Activated CD8-positive, alpha-beta memory T cell treated with anti-CD3 and anti-CD28 coated beads, Interleukin-2, amount 10 ng/mL, durations not matched to agents 7 days and 5 days (primary cell): ENCODE measurements at regions of chr12 and their contacts with region 1.

Region 1: GRCh38 chr12:117587631-117588287 is 226.3 kb upstream of the NOS1 start:
- DNase-seq: peak; percentile 53
- ATAC-seq: no peak
- H3K4me3 Mint-ChIP-seq: no peak overlapping the region
- H3K27ac Mint-ChIP-seq: no peak overlapping the region
- H3K4me1 Mint-ChIP-seq: no peaks in the 10 kb centered on the region
- H3K27me3 Mint-ChIP-seq: peaks cover 4% of the 10 kb centered on the region

Region 2: GRCh38 chr12:117236456-117237001 is 351.2 kb before region 1 on chr12:
- CTCF ChIA-PET with region 1: interaction called, 34 read pairs
- DNase-seq: peak; percentile 84
- ATAC-seq: peak; percentile 63
- H3K4me3 Mint-ChIP-seq: no peak overlapping the region
- H3K27ac Mint-ChIP-seq: no peak overlapping the region
- H3K4me1 Mint-ChIP-seq: no peaks in the 10 kb centered on the region
- H3K27me3 Mint-ChIP-seq: peaks cover 9% of the 10 kb centered on the region

Region 3: GRCh38 chr12:117367011-117367638 is 220.6 kb before region 1 on chr12:
- CTCF ChIA-PET with region 1: interaction called, 37 read pairs
- DNase-seq: peak; percentile 66
- ATAC-seq: no peak
- H3K4me3 Mint-ChIP-seq: no peak overlapping the region
- H3K27ac Mint-ChIP-seq: no peak overlapping the region
- H3K4me1 Mint-ChIP-seq: no peaks in the 10 kb centered on the region
- H3K27me3 Mint-ChIP-seq: peaks cover 21% of the 10 kb centered on the region